ENCODE measurements at regions of chr11 and their contacts with region 1.

Region 1: GRCh38 chr11:9969068-9969467 is 305.2 kb downstream of the SWAP70 start:
- DNase-seq: no peak
- H3K4me3 ChIP-seq: no peak overlapping the region
- H3K4me1 ChIP-seq: peaks cover 7% of the 10 kb centered on the region
- H3K27me3 ChIP-seq: no peaks in the 10 kb centered on the region

Region 2: DNA sequence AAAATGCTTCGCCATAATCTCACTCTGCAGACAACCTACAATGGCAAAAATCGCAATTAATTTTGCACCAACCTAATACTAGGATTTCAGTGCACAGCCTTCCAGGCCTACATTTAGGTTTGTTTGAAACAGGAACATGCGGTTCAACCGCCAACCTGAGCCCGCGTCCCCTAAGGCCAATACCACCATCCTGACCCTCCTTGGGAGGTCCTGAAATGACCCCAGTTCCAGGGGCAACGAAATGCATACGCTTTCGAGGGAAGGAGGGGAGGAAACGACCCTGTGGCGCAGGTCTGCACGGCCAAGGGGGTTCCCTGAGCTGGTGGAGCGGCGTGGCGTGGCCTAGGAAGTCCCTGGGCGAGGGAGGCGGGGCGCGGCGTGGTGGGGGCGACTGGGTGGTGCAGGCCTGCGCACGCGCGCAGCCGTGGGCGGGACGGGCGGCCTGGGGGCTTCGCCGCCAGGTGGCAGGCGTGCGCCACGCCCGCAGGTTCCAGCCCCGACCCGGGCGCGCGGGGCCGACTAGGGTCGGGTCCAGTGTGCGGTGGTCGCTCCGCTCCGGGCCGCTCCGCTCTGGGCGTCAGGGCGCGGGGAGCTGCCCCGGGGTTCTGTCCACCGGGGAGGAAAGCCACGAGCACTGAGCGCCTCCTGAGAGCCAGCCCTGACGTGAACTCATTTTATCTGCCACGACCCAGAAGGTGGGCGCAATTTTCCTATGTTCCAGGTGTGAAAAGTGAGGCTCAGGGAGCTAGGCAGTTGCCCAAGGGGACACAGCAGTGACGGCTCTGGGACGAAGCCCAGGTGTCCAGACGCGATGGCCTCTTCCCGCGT is 211.0 kb before region 1 on chr11:
- in situ Hi-C with region 1: loop called (anchors 5 kb)
- DNase-seq: peak; percentile 66 to 94
- H3K4me3 ChIP-seq: peak overlapping the region; percentile 46
- H3K4me1 ChIP-seq: peaks cover 38% of the 10 kb centered on the region
- H3K27me3 ChIP-seq: no peaks in the 10 kb centered on the region